Thyroid gland (tissue), 4 donors: ENCODE measurements at regions of chr11 and their contacts with region 1.

Region 1: GRCh38 chr11:207208-207862 is at the starts of genes BET1L and RIC8A:
- DNase-seq: peak; percentile 98
- H3K4me3 ChIP-seq: peak within 1 kb of the TSS; percentile 88 to 96 (median 94)
- H3K27ac ChIP-seq: peak within 1 kb of the TSS; percentile 57 to 96 (median 94)
- H3K4me1 ChIP-seq: peaks cover 21 to 32% of the 10 kb centered on the region in 2 donors
- H3K27me3 ChIP-seq: no peaks in the 10 kb centered on the region
- CTCF ChIP-seq: no peak
- POLR2A ChIP-seq: peak; percentile 39 to 94
- total RNA-seq, gene BET1L: 22.2 to 39.5 (median 33.8) TPM
- total RNA-seq, gene RIC8A: 65.8 to 128 (median 99.8) TPM

Region 2: GRCh38 chr11:288328-289144 is 81.2 kb after region 1 on chr11 and contains the start of gene PGGHG:
- intact Hi-C with region 1: loop called (anchors 10 kb)
- DNase-seq: peak; percentile 73 to 75
- H3K4me3 ChIP-seq: peak within 1 kb of the TSS; percentile 3 to 73 (median 51)
- H3K27ac ChIP-seq: peak within 1 kb of the TSS in 2 of 3 donors; percentile 28 to 59
- H3K4me1 ChIP-seq: peaks cover 13 to 20% of the 10 kb centered on the region in 2 donors
- H3K27me3 ChIP-seq: no peaks in the 10 kb centered on the region
- CTCF ChIP-seq: no peak
- POLR2A ChIP-seq: no peak
- total RNA-seq, gene PGGHG: 21.8 to 43.3 (median 32.7) TPM

Region 3: GRCh38 chr11:449880-450808 is 242.8 kb after region 1 on chr11 and contains the start of gene PTDSS2:
- intact Hi-C with region 1: loop called (anchors 10 kb)
- DNase-seq: peak; percentile 97
- H3K4me3 ChIP-seq: peak within 1 kb of the TSS; percentile 79 to 98 (median 93)
- H3K27ac ChIP-seq: peak within 1 kb of the TSS; percentile 72 to 96 (median 92)
- H3K4me1 ChIP-seq: peaks cover 21 to 22% of the 10 kb centered on the region in 2 donors
- H3K27me3 ChIP-seq: no peaks in the 10 kb centered on the region
- CTCF ChIP-seq: peak in 1 of 6 experiments; percentile 22
- POLR2A ChIP-seq: peak in 1 of 2 donors; percentile 88
- total RNA-seq, gene PTDSS2: 40.8 to 69.9 (median 41.7) TPM

Region 4: GRCh38 chr11:506238-506994 is 299.1 kb after region 1 on chr11:
- intact Hi-C with region 1: loop called (anchors 10 kb)
- DNase-seq: peak; percentile 97 to 98
- H3K4me3 ChIP-seq: peak overlapping the region; percentile 77 to 94 (median 89)
- H3K27ac ChIP-seq: peak overlapping the region; percentile 97 to 99 (median 97)
- H3K4me1 ChIP-seq: peaks cover 31 to 44% of the 10 kb centered on the region in 2 donors
- H3K27me3 ChIP-seq: no peaks in the 10 kb centered on the region
- CTCF ChIP-seq: peak in 1 of 6 experiments; percentile 6
- POLR2A ChIP-seq: peak; percentile 43 to 78